HEK293 (cell line): ENCODE measurements at regions of chr19 and their contacts with region 1.

Region 1: DNA sequence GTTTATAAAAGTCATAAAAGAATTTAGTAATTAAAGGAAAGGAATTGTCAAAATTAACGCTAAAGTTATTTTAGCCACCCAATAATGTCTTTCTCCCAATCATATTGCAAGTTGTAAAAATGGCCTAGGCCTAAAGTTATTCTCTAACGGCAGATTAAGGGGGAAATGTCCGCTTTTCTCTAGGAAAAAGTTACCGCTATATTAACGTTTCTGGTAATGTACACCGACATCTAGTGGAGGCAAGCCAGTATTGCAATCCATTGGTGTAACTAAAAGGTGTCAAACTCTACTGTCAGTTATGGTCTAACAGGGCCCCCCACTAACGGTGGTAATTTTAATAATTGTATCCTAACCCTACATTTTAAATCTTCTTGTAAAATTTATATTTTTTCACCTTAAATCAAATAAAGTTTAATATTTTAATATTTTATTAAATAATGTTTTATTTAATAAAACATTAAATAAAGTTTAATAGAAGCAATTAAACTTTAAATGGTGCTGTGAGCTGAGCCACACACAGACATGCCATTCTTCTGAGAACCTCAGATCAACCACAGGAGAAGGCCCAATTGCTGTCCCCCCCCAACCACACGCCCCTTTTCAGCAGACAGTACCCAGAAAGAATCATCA is 35.9 kb upstream of the ZSCAN5A start:
- H3K4me3 ChIP-seq: no peak overlapping the region
- H3K27ac ChIP-seq: no peak overlapping the region
- H3K4me1 ChIP-seq: no peaks in the 10 kb centered on the region
- CTCF ChIP-seq: no peak

Region 2: GRCh38 chr19:56261145-56261544 is 89.4 kb before region 1 on chr19:
- CTCF ChIA-PET with region 1: no interaction called
- POLR2A ChIA-PET with region 1: no interaction called
- H3K4me3 ChIP-seq: no peak overlapping the region
- H3K27ac ChIP-seq: no peak overlapping the region
- H3K4me1 ChIP-seq: no peaks in the 10 kb centered on the region
- CTCF ChIP-seq: no peak

Region 3: DNA sequence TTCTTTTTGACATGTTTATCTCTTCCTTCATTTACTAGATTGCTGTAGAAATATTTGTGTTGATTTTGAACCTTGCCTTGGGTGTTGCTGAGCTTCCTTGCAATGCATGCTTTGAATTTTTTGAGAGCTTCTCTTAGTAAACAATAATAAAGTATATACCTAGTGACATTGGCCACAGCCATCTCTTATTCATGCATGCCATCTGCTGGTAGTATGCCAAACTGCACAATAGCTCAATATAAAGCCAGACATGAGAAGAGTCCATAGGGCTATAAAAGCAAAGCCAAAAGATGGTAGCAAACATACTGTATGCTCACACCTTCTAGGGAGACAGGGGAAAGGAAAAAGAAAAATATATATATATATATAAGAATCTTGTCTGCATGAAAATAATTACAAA is 17.0 kb before region 1 on chr19:
- CTCF ChIA-PET with region 1: interaction called, 19 read pairs
- POLR2A ChIA-PET with region 1: no interaction called
- H3K4me3 ChIP-seq: no peak overlapping the region
- H3K27ac ChIP-seq: no peak overlapping the region
- H3K4me1 ChIP-seq: no peaks in the 10 kb centered on the region
- CTCF ChIP-seq: no peak

Region 4: GRCh38 chr19:56360841-56361240 is 10.3 kb after region 1 on chr19:
- CTCF ChIA-PET with region 1: interaction called, 12 read pairs
- POLR2A ChIA-PET with region 1: no interaction called
- H3K4me3 ChIP-seq: no peak overlapping the region
- H3K27ac ChIP-seq: no peak overlapping the region
- H3K4me1 ChIP-seq: no peaks in the 10 kb centered on the region
- CTCF ChIP-seq: no peak